WTC11 (cell line): ENCODE measurements at regions of chr19 and their contacts with region 1.

Region 1: GRCh38 chr19:11482384-11483050 is 1.7 kb upstream of the ELAVL3 start:
- DNase-seq: peak; percentile 89
- ATAC-seq: peak; percentile 8; the same call in 1 of the 2 replicates
- H3K4me3 Mint-ChIP-seq: peak overlapping the region; percentile 62
- H3K27ac Mint-ChIP-seq: no peak overlapping the region
- H3K4me1 Mint-ChIP-seq: peaks cover 13% of the 10 kb centered on the region
- H3K27me3 Mint-ChIP-seq: peaks cover 48% of the 10 kb centered on the region
- CTCF ChIP-seq: peak; percentile 97

Region 2: DNA sequence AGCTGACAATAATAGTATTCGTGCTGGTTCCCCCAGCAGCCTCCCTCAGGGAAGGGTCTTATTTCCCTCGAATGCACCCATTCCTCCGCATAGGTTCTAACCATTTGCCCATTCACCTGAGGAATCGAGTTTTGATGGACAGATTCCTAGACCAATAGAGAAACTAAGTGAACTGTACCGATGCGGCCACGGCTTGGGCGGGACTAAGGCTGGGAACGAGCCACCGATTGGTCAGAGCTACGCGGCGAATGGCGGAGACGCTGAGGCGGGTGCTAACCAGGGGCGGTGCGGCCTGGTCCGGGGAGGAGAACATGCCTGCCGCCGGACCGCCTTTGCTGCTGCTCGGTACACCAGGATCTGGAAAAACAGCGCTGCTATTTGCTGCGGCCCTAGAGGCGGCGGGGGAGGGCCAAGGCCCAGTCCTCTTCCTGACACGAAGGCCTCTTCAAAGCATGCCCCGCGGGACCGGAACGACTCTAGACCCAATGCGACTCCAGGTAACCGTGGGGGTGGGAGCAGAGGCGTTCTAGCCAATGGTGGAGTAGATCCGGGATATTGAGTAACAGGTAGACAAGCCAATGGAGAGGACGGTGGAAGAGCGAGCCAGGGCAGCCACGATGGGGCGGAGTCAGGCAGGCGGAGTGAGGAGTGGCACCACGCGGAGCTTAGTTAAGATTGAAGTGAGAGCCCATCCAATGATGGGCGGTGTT is 107.9 kb before region 1 on chr19 and contains the start of gene SWSAP1:
- CTCF ChIA-PET with region 1: interaction called, 36 read pairs
- POLR2A ChIA-PET with region 1: interaction called, 5 read pairs
- DNase-seq: peak; percentile 98
- ATAC-seq: peak; percentile 93
- H3K4me3 Mint-ChIP-seq: no peak within 1 kb of the TSS
- H3K27ac Mint-ChIP-seq: no peak within 1 kb of the TSS; the same call in 1 of the 2 replicates
- H3K4me1 Mint-ChIP-seq: peaks cover 19% of the 10 kb centered on the region
- H3K27me3 Mint-ChIP-seq: no peaks in the 10 kb centered on the region
- CTCF ChIP-seq: no peak
- total RNA-seq, gene SWSAP1: 2.4 to 3.9 TPM (median 3.0 TPM) in 3 replicates

Region 3: DNA sequence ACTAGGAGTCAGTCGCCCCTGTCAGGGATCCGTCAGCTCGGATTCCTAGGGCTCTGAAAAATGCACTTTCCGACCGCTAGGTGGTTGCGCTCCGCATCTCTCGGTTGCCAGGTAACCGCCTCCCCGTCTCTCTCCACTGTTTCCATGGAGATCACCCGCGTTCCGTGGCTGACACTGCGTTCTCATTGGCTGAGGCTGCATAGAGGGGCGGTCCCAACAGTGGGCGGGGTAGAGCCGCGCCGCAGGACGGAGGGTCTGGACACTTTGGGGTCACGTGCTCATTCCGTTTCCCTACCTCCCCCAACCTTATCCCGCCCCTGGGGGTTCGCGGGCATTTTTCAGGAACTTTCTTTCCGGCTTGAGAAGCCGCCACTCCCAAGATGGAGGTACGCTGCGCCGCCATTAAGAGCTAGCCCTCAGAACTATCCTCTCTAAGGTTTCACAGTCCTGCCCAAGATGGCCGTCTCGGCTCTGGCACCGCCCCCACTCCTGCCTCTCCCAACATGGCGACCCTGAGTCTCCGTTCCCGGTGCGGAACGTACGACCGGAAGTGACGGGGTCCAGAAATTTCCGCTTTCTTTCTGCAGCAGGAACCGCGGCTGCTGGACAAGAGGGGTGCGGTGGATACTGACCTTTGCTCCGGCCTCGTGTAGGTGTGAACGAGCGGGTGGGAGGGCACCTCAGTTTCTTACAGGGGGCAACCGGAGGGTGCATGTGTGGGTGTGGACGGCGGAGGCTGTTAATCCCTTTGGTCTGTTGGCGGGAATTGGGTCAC is 47.3 kb before region 1 on chr19 and contains the starts of genes ODAD3 and PRKCSH:
- CTCF ChIA-PET with region 1: interaction called, 16 read pairs
- POLR2A ChIA-PET with region 1: no interaction called
- DNase-seq: peak; percentile 99
- ATAC-seq: peak; percentile 91
- H3K4me3 Mint-ChIP-seq: peak within 1 kb of the TSS; percentile 96
- H3K27ac Mint-ChIP-seq: peak within 1 kb of the TSS; percentile 97
- H3K4me1 Mint-ChIP-seq: peaks cover 11% of the 10 kb centered on the region
- H3K27me3 Mint-ChIP-seq: no peaks in the 10 kb centered on the region
- CTCF ChIP-seq: peak; percentile 95
- total RNA-seq, gene ODAD3: 4.1 to 5.8 TPM (median 4.8 TPM) in 3 replicates
- total RNA-seq, gene PRKCSH: 396 to 405 TPM (median 402 TPM) in 3 replicates

Region 4: GRCh38 chr19:11465613-11466012 is 16.9 kb before region 1 on chr19:
- CTCF ChIA-PET with region 1: interaction called, 10 read pairs
- POLR2A ChIA-PET with region 1: no interaction called
- DNase-seq: peak; percentile 69
- ATAC-seq: peak; percentile 46; the same call in 1 of the 2 replicates
- H3K4me3 Mint-ChIP-seq: no peak overlapping the region
- H3K27ac Mint-ChIP-seq: no peak overlapping the region
- H3K4me1 Mint-ChIP-seq: peaks cover 12% of the 10 kb centered on the region; the same call in 1 of the 2 replicates
- H3K27me3 Mint-ChIP-seq: no peaks in the 10 kb centered on the region
- CTCF ChIP-seq: no peak

Region 5: DNA sequence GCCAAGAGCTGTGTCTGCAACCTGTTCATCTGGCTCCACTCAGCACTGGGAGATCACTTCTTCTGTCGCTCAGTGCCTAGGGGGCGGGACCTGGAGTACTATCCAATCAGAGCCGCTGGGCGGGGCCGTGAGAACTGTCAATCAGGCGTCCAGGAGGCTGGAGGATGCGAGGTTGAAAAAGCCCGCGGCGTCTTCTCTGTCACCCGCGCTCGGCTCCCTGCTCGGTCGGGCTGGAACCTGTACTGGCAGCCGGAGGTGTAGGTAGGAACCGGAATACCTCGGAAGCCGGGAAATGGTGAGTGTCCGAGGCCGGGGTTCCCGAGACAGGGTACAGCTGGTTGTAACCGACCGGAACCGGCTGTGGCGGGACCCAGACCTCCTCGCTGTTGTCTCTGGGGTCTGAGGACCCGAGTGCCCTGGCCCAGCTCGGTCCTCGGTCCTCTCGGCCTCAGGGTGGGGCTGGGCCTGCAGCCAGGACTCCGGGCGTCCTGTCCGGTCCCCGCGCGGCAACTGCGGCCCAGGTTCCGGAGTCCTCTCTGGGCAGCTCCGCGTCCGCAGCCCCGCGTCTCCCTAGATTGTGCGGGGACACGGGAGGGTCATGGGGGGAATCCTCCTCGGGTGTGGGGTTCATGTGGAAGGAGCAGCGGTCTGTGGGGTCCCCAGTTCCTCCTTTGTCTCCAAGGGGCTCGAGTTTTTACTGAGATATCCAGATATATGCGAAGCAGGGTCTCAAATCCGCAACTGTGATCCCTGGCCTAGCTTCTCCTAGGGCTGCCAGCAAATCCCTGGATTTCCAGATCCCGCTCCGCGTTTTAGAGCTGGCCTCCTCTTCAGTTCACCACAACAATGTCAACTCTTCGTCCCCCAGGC is 157.3 kb after region 1 on chr19:
- CTCF ChIA-PET with region 1: no interaction called
- POLR2A ChIA-PET with region 1: no interaction called
- DNase-seq: peak; percentile 100
- ATAC-seq: peak; percentile 98
- H3K4me3 Mint-ChIP-seq: peak overlapping the region; percentile 87
- H3K27ac Mint-ChIP-seq: peak overlapping the region; percentile 84
- H3K4me1 Mint-ChIP-seq: peaks cover 4% of the 10 kb centered on the region
- H3K27me3 Mint-ChIP-seq: no peaks in the 10 kb centered on the region
- CTCF ChIP-seq: no peak